ENCODE measurements at regions of chr16 and their contacts with region 1.

Region 1: GRCh38 chr16:2520092-2520783 is at the start of gene AMDHD2:
- DNase-seq: peak; percentile 85 to 92 (median 89)
- H3K4me3 ChIP-seq: peak within 1 kb of the TSS; percentile 58
- H3K4me3 Mint-ChIP-seq: peak within 1 kb of the TSS; percentile 90 to 98 (median 92)
- H3K27ac ChIP-seq: peak within 1 kb of the TSS; percentile 73
- H3K27ac Mint-ChIP-seq: peak within 1 kb of the TSS; percentile 92 to 99 (median 96)
- H3K4me1 ChIP-seq: peaks cover 52% of the 10 kb centered on the region
- H3K4me1 Mint-ChIP-seq: peaks cover 56 to 70% (median 57%) of the 10 kb centered on the region in 3 donors
- H3K27me3 ChIP-seq: no peaks in the 10 kb centered on the region
- H3K27me3 Mint-ChIP-seq: peaks cover 0 to 7% of the 10 kb centered on the region in 2 donors
- total RNA-seq, gene AMDHD2: 34.1 to 35.5 TPM

Region 2: DNA sequence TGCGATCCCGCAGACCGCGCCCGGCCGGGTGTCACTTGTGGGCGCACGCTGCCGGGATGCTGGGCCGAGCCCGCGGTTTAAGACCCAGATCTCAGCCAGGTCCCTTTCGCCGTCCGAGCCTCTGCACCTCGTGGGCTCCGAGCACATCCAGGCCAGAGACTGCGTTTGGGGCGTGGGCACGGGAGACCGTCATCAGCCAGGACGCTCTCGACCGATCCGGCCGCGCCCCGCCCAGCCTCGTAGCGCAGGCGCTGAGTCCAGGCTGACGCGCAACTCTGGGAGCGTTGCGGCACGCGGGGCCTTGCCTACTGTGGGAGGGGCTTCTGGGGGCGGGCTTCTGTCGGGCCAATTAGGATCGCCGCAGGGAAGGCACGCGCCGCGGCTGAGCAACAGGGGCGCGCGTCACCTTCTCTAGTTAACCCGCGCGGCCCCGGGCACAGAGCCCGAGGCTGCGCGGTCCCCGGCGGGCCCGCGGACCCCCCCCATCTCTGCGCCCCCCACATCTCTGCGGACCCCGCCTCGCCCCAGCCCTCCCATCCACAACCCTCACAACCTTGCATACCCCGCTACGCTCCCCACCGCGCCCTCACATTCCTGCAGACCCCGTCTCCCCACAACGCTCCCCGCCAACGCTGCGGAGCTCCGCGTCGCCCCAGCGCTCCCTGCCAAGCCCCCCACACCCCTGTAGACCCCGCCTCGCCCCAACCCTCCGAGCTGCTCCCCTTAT is 11.7 kb after region 1 on chr16:
- CTCF ChIA-PET with region 1: interaction called, 12 read pairs
- POLR2A ChIA-PET with region 1: interaction called, 65 read pairs
- DNase-seq: peak; percentile 96 to 98 (median 97)
- H3K4me3 ChIP-seq: peak overlapping the region; percentile 98
- H3K4me3 Mint-ChIP-seq: peak overlapping the region; percentile 93 to 99 (median 95)
- H3K27ac ChIP-seq: peak overlapping the region; percentile 97
- H3K27ac Mint-ChIP-seq: peak overlapping the region; percentile 98 to 99 (median 99)
- H3K4me1 ChIP-seq: peaks cover 9% of the 10 kb centered on the region
- H3K4me1 Mint-ChIP-seq: peaks cover 14 to 29% (median 15%) of the 10 kb centered on the region in 3 donors
- H3K27me3 ChIP-seq: no peaks in the 10 kb centered on the region
- H3K27me3 Mint-ChIP-seq: peaks cover 0 to 2% of the 10 kb centered on the region in 2 donors

Region 3: DNA sequence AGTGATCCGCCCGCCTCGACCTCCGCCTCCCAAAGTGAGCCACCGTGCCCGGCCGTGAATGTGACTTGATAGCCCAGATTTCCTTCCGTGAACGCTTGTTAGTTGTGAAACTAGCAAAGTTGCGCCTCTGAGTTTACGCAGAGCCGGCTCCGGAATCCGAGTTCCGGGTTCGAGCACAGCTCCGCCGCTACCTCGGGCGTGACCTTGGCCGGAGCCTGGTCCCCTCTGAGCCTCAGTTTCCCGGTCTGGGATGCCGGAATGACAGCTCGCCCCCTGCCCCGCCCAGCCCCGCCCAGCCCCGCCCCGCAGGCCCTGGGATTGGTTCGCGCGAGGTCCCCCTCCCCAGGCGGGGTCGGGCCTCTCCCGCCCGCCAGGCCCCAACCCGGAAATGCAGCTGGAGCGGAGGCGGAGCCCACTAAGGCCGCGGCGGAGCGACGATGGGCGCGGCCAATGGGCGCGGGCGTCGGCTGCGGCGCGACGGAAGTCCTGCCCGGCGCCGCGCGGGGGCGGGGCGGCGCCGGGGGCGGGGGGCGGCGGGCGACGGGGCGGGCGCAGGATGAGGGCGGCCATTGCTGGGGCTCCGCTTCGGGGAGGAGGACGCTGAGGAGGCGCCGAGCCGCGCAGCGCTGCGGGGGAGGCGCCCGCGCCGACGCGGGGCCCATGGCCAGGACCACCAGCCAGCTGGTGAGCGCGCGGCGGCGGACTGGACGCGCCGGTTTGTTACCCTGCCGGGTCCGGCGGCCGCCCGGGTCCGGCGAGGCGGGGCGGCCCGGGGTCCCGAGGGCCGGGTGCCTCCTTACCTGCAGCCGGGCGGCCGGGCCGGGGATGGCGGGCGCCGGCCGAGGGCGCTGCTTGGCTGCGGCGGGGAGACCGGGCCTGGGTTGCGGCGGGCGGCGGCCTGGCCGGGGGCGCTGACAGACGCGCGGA is 17.5 kb after region 1 on chr16 and contains the start of gene PDPK1:
- CTCF ChIA-PET with region 1: interaction called, 12 read pairs
- POLR2A ChIA-PET with region 1: interaction called, 65 read pairs
- DNase-seq: peak; percentile 91 to 96 (median 95)
- H3K4me3 ChIP-seq: peak within 1 kb of the TSS; percentile 64
- H3K4me3 Mint-ChIP-seq: peak within 1 kb of the TSS; percentile 85 to 95 (median 87)
- H3K27ac ChIP-seq: peak within 1 kb of the TSS; percentile 61
- H3K27ac Mint-ChIP-seq: peak within 1 kb of the TSS; percentile 57 to 99 (median 90)
- H3K4me1 ChIP-seq: peaks cover 29% of the 10 kb centered on the region
- H3K4me1 Mint-ChIP-seq: peaks cover 39 to 49% (median 41%) of the 10 kb centered on the region in 3 donors
- H3K27me3 ChIP-seq: no peaks in the 10 kb centered on the region
- H3K27me3 Mint-ChIP-seq: peaks cover 0 to 2% of the 10 kb centered on the region in 2 donors
- total RNA-seq, gene PDPK1: 56.8 to 58.5 TPM

Measured in CD8-positive, alpha-beta memory T cell (primary cell).